HEK293T (cell line): ENCODE measurements at regions of chr14 and their contacts with region 1.

Region 1: DNA sequence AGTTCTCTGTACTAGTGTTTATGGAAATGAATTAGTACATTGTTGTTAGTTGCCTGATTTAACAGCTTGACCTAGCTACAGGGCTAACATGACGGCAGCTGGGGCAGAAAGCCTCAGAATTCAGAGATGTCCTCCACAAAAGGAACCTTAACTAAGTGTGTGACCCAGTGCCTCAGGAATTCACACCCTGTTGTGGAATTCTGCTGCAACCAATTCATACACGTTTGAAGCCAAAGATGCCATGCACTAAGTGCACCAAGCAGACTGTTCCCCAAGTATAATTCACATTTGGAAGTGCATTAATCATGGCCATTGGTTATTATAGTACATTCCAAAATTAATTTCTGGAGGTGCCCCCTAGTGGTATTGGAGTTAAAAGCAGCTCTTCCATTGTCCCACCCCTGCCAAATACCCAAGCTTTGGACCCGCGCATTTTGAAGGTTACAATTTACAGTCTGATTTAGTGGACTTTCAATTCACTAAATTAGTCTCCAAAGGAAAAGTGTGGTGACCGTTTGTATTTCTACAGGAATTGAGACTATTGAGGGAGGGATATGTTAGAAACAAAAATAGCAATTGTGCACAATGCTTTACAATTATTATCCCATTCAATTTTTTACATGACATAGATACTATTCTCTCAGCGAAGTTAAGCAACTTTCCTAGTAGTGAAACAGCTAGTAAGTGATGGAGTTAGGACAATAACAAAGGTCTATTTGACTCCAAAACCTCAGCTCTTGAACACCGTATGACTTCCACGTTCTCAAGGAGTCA is 85.9 kb downstream of the PAX9 start:
- DNase-seq: peak; percentile 54

Region 2: GRCh38 chr14:36757734-36758601 is 10.4 kb after region 1 on chr14:
- CTCF ChIA-PET with region 1: interaction called, 17 read pairs
- POLR2A ChIA-PET with region 1: no interaction called
- DNase-seq: no peak